ENCODE measurements at regions of chr12 and their contacts with region 1.

Region 1: DNA sequence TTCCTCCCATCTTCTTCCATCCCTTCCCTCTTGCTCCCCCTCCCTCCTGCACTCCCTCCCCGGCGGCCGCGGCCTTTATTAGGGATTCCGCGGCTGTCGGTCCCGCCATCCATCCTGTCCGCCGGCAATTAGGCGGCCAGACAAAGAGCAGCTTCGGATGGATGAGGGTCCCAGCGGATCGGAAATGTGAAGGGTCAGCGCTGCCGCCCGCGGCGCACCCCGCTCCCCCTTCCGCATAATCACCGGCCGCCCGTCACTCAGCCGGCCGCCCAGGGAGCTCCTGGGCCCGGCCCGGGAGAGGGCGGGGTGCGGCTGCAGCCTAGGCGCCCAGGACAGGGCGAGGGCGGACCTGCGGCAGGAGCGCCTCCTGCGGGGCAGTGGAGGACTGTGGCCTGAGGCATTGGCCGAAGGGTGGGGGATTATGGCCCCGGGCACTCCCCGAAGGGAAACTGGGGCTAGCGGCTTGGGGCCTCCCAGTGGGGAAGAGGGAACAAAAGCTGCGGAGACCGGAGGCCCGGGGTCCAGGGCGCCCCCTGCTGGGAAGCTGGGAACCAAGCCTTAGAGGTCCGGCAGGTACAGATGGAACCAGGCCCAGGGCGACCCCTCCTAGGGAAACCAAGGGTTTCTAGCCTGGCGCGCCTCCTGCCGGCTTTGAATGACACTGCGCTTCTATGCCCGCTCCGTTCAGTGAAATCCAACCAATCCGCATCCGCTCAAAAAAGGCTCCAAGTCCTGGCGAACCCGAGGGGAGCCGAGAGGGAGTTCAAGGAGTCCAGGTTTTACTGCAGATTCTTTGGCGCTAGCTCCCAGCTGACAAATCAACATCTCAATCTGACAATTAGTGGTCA is 4.4 kb upstream of the DNAJC22 start:
- DNase-seq: peak; percentile 27 to 83 (median 61)
- ATAC-seq: peak; percentile 59 to 71 (median 61)
- H3K4me3 ChIP-seq: peak overlapping the region; percentile 48 to 60
- H3K4me3 Mint-ChIP-seq: peak overlapping the region; percentile 51 to 73 (median 70)
- H3K27ac ChIP-seq: no peak overlapping the region
- H3K27ac Mint-ChIP-seq: no peak overlapping the region
- H3K4me1 ChIP-seq: peaks cover 30 to 62% of the 10 kb centered on the region in 2 experiments
- H3K4me1 Mint-ChIP-seq: peaks cover 45 to 55% (median 46%) of the 10 kb centered on the region in 3 donors
- H3K27me3 ChIP-seq: peaks cover 28 to 91% of the 10 kb centered on the region in 2 experiments
- H3K27me3 Mint-ChIP-seq: peaks cover 44 to 65% of the 10 kb centered on the region in 2 donors

Region 2: GRCh38 chr12:49288412-49288853 is 53.9 kb before region 1 on chr12:
- CTCF ChIA-PET with region 1: interaction called, 5 to 20 read pairs
- POLR2A ChIA-PET with region 1: no interaction called
- DNase-seq: peak in 34 of 35 experiments; percentile 22 to 86 (median 58)
- ATAC-seq: peak; percentile 68 to 77 (median 74)
- H3K4me3 ChIP-seq: no peak overlapping the region
- H3K4me3 Mint-ChIP-seq: no peak overlapping the region
- H3K27ac ChIP-seq: no peak overlapping the region
- H3K27ac Mint-ChIP-seq: no peak overlapping the region
- H3K4me1 ChIP-seq: no peaks in the 10 kb centered on the region
- H3K4me1 Mint-ChIP-seq: no peaks in the 10 kb centered on the region
- H3K27me3 ChIP-seq: peaks cover 6 to 54% of the 10 kb centered on the region in 2 experiments
- H3K27me3 Mint-ChIP-seq: peaks cover 29 to 49% of the 10 kb centered on the region in 2 donors

Region 3: GRCh38 chr12:49305762-49306510 is 36.4 kb before region 1 on chr12:
- CTCF ChIA-PET with region 1: no interaction called
- POLR2A ChIA-PET with region 1: no interaction called
- DNase-seq: no peak
- ATAC-seq: no peak
- H3K4me3 ChIP-seq: no peak overlapping the region
- H3K4me3 Mint-ChIP-seq: no peak overlapping the region
- H3K27ac ChIP-seq: no peak overlapping the region
- H3K27ac Mint-ChIP-seq: no peak overlapping the region
- H3K4me1 ChIP-seq: no peaks in the 10 kb centered on the region
- H3K4me1 Mint-ChIP-seq: peaks cover 0 to 3% (median 0%) of the 10 kb centered on the region in 3 donors
- H3K27me3 ChIP-seq: peaks cover 0 to 21% of the 10 kb centered on the region in 2 experiments
- H3K27me3 Mint-ChIP-seq: peaks cover 43 to 51% of the 10 kb centered on the region in 2 donors

Region 4: DNA sequence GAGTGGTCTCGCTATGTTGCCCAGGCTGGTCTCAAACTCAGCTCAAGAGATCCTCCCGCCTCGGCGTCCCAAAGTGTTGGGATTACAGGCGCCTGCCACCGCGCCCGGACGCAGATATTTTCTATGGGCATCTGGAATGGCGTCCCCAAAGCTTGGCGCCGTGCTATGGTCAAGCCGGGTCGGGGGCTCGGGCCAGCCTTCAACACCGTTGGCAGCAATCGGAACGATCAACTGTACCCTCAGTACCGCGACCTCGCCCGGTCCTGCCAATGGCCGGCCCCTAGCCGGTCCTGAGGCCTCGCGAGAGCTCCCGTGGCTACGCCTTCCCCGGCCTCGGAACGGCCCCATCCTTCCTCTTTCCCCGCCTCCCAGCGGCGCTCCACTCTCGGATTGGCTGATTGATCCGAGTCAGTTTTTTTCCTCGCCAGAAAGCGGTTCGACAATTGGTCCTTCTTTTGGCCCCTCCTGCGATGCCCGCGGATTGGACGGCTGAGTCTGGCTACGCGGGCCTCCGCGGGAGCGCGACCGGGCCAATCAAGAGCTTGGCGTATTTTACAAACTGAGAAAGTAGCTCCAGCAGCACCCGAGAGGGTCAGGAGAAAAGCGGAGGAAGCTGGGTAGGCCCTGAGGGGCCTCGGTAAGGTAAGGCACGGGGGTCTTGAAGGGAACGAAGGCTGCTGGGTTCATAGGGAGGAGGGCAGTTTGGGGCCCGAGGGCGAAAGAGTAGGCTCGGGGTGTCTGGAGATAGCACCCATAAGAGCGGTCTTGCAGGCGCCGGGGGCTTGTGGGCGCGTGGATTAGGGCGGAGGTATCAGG is 19.4 kb before region 1 on chr12 and contains the start of gene TROAP:
- CTCF ChIA-PET with region 1: interaction called in 1 of 2 experiments, 11 read pairs
- POLR2A ChIA-PET with region 1: no interaction called
- DNase-seq: peak; percentile 92 to 98 (median 96)
- ATAC-seq: peak; percentile 96 to 99 (median 98)
- H3K4me3 ChIP-seq: peak within 1 kb of the TSS; percentile 83 to 95
- H3K4me3 Mint-ChIP-seq: peak within 1 kb of the TSS; percentile 86 to 90 (median 87)
- H3K27ac ChIP-seq: peak within 1 kb of the TSS; percentile 60
- H3K27ac Mint-ChIP-seq: peak within 1 kb of the TSS; percentile 71 to 75
- H3K4me1 ChIP-seq: peaks cover 5 to 22% of the 10 kb centered on the region in 2 experiments
- H3K4me1 Mint-ChIP-seq: peaks cover 17 to 22% (median 20%) of the 10 kb centered on the region in 3 donors
- H3K27me3 ChIP-seq: no peaks in the 10 kb centered on the region
- H3K27me3 Mint-ChIP-seq: no peaks in the 10 kb centered on the region
- total RNA-seq, gene TROAP: 0.98 to 1.9 (median 1.3) TPM

Region 5: DNA sequence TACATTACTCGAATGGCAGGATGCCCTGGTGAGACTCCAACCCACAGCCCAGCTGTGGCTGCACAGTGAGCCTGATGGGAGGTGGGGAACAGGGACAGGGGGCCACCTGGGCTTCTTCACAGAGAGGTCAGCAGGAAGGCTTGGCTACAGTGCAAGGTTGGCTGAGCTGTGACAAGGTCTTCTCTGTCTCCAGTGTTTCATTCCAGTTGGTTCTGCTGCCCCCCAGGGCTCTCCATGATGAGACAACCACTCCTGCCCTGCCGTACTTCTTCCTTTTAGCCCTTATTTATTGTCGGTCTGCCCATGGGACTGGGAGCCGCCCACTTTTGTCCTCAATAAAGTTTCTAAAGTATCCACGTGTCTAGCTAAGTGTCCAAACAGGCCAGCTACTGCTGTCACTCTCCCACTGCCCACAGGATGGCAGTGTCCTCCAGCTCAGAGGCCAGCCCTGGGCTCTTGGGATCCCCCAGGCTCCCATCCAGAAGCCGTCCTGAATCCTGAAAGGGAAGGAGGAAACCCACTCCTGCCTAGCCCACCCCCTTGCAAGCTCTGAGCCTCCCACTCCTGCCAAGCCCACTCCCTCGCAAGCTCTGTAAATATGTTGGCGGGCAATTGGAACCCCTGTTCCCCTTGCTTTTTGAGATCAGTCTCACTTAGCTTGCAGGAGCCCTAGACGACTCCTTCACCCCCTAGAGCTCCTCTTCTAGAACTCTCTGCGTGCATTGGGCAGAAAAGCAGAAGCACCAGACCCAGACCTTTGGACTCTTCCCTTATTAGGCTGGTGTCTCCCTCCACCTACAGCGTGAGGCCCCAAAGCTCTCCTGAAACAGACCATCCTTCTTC is 10.7 kb before region 1 on chr12:
- CTCF ChIA-PET with region 1: interaction called, 5 to 12 read pairs
- POLR2A ChIA-PET with region 1: no interaction called
- DNase-seq: no peak
- ATAC-seq: peak in 3 of 4 experiments; percentile 37 to 67 (median 50)
- H3K4me3 ChIP-seq: no peak overlapping the region
- H3K4me3 Mint-ChIP-seq: no peak overlapping the region
- H3K27ac ChIP-seq: no peak overlapping the region
- H3K27ac Mint-ChIP-seq: no peak overlapping the region
- H3K4me1 ChIP-seq: peaks cover 0 to 14% of the 10 kb centered on the region in 2 experiments
- H3K4me1 Mint-ChIP-seq: peaks cover 1 to 15% (median 6%) of the 10 kb centered on the region in 3 donors
- H3K27me3 ChIP-seq: peaks cover 5 to 63% of the 10 kb centered on the region in 2 experiments
- H3K27me3 Mint-ChIP-seq: peaks cover 36 to 43% of the 10 kb centered on the region in 2 donors

Region 6: GRCh38 chr12:49415521-49415970 is 73.3 kb after region 1 on chr12:
- CTCF ChIA-PET with region 1: no interaction called
- POLR2A ChIA-PET with region 1: no interaction called
- DNase-seq: no peak
- ATAC-seq: no peak
- H3K4me3 ChIP-seq: no peak overlapping the region
- H3K4me3 Mint-ChIP-seq: no peak overlapping the region
- H3K27ac ChIP-seq: no peak overlapping the region
- H3K27ac Mint-ChIP-seq: peak overlapping the region in 1 of 2 donors; percentile 11
- H3K4me1 ChIP-seq: peaks cover 0 to under 1% of the 10 kb centered on the region in 2 experiments
- H3K4me1 Mint-ChIP-seq: no peaks in the 10 kb centered on the region
- H3K27me3 ChIP-seq: no peaks in the 10 kb centered on the region
- H3K27me3 Mint-ChIP-seq: no peaks in the 10 kb centered on the region

Measured in T-cell (primary cell).